ENCODE measurements at regions of chr4 and their contacts with region 1.

Region 1: GRCh38 chr4:23889814-23890341 is at the start of gene PPARGC1A:
- DNase-seq: peak; percentile 50

Region 2: GRCh38 chr4:23697722-23698121 is 192.2 kb before region 1 on chr4:
- CTCF ChIA-PET with region 1: no interaction called
- POLR2A ChIA-PET with region 1: no interaction called
- DNase-seq: no peak

Region 3: GRCh38 chr4:23737571-23737970 is 152.3 kb before region 1 on chr4:
- CTCF ChIA-PET with region 1: no interaction called
- POLR2A ChIA-PET with region 1: no interaction called
- DNase-seq: no peak

Region 4: GRCh38 chr4:23876418-23877089 is 13.3 kb before region 1 on chr4:
- CTCF ChIA-PET with region 1: no interaction called
- POLR2A ChIA-PET with region 1: interaction called, 18 read pairs
- DNase-seq: no peak

Region 5: GRCh38 chr4:24067367-24068193 is 177.7 kb after region 1 on chr4:
- CTCF ChIA-PET with region 1: no interaction called
- POLR2A ChIA-PET with region 1: no interaction called
- DNase-seq: no peak

Measured in HEK293T (cell line).